ENCODE measurements at regions of chr5 and their contacts with region 1.

Region 1: GRCh38 chr5:1799602-1800471 is at the start of gene MRPL36:
- DNase-seq: peak; percentile 79 to 92 (median 87)
- ATAC-seq: peak; percentile 84
- H3K4me3 ChIP-seq: peak within 1 kb of the TSS; percentile 63
- H3K4me3 Mint-ChIP-seq: peak within 1 kb of the TSS; percentile 93 to 100 (median 99)
- H3K27ac ChIP-seq: peak within 1 kb of the TSS; percentile 88
- H3K27ac Mint-ChIP-seq: peak within 1 kb of the TSS; percentile 95 to 100 (median 99)
- H3K4me1 ChIP-seq: peaks cover 12 to 13% of the 10 kb centered on the region in 2 donors
- H3K4me1 Mint-ChIP-seq: peaks cover 41 to 69% (median 60%) of the 10 kb centered on the region in 7 donors
- H3K27me3 ChIP-seq: no peaks in the 10 kb centered on the region
- H3K27me3 Mint-ChIP-seq: no peaks in the 10 kb centered on the region
- total RNA-seq, gene MRPL36: 14.1 to 52.6 (median 26.8) TPM

Region 2: GRCh38 chr5:611721-612486 is 1187.9 kb before region 1 on chr5 and contains the start of gene CEP72:
- CTCF ChIA-PET with region 1: no interaction called
- POLR2A ChIA-PET with region 1: no interaction called
- intact Hi-C with region 1: loop called in 1 of 2 experiments (anchors 10 kb)
- DNase-seq: peak; percentile 81 to 96 (median 88)
- ATAC-seq: peak; percentile 98
- H3K4me3 ChIP-seq: peak within 1 kb of the TSS; percentile 59
- H3K4me3 Mint-ChIP-seq: peak within 1 kb of the TSS; percentile 84 to 99 (median 95)
- H3K27ac ChIP-seq: peak within 1 kb of the TSS; percentile 75
- H3K27ac Mint-ChIP-seq: peak within 1 kb of the TSS; percentile 76 to 96 (median 85)
- H3K4me1 ChIP-seq: peaks cover 5 to 7% of the 10 kb centered on the region in 2 donors
- H3K4me1 Mint-ChIP-seq: peaks cover 36 to 60% (median 56%) of the 10 kb centered on the region in 7 donors
- H3K27me3 ChIP-seq: no peaks in the 10 kb centered on the region
- H3K27me3 Mint-ChIP-seq: peaks cover 0 to 14% (median 8%) of the 10 kb centered on the region in 5 donors
- total RNA-seq, gene CEP72: 13.4 to 33.8 (median 22.7) TPM

Region 3: GRCh38 chr5:1105350-1106265 is 694.2 kb before region 1 on chr5:
- CTCF ChIA-PET with region 1: no interaction called
- POLR2A ChIA-PET with region 1: no interaction called
- intact Hi-C with region 1: loop called (anchors 2 to 5 kb)
- DNase-seq: peak; percentile 50 to 86 (median 83)
- ATAC-seq: peak; percentile 82
- H3K4me3 ChIP-seq: peak overlapping the region; percentile 77
- H3K4me3 Mint-ChIP-seq: peak overlapping the region; percentile 77 to 94 (median 88)
- H3K27ac ChIP-seq: peak overlapping the region; percentile 89
- H3K27ac Mint-ChIP-seq: peak overlapping the region; percentile 85 to 100 (median 97)
- H3K4me1 ChIP-seq: peaks cover 37 to 79% of the 10 kb centered on the region in 2 donors
- H3K4me1 Mint-ChIP-seq: peaks cover 48 to 90% (median 69%) of the 10 kb centered on the region in 7 donors
- H3K27me3 ChIP-seq: no peaks in the 10 kb centered on the region
- H3K27me3 Mint-ChIP-seq: no peaks in the 10 kb centered on the region

Region 4: GRCh38 chr5:1344975-1345838 is 454.6 kb before region 1 on chr5 and contains the start of gene CLPTM1L:
- CTCF ChIA-PET with region 1: no interaction called
- POLR2A ChIA-PET with region 1: no interaction called
- intact Hi-C with region 1: loop called (anchors 2 to 10 kb)
- DNase-seq: peak; percentile 82 to 93 (median 90)
- ATAC-seq: peak; percentile 95
- H3K4me3 ChIP-seq: peak within 1 kb of the TSS; percentile 79
- H3K4me3 Mint-ChIP-seq: peak within 1 kb of the TSS; percentile 84 to 95 (median 91)
- H3K27ac ChIP-seq: peak within 1 kb of the TSS; percentile 97
- H3K27ac Mint-ChIP-seq: peak within 1 kb of the TSS; percentile 72 to 95 (median 88)
- H3K4me1 ChIP-seq: peaks cover 12 to 18% of the 10 kb centered on the region in 2 donors
- H3K4me1 Mint-ChIP-seq: peaks cover 21 to 44% (median 33%) of the 10 kb centered on the region in 7 donors
- H3K27me3 ChIP-seq: no peaks in the 10 kb centered on the region
- H3K27me3 Mint-ChIP-seq: no peaks in the 10 kb centered on the region
- total RNA-seq, gene CLPTM1L: 64.9 to 104 (median 71.9) TPM

Region 5: DNA sequence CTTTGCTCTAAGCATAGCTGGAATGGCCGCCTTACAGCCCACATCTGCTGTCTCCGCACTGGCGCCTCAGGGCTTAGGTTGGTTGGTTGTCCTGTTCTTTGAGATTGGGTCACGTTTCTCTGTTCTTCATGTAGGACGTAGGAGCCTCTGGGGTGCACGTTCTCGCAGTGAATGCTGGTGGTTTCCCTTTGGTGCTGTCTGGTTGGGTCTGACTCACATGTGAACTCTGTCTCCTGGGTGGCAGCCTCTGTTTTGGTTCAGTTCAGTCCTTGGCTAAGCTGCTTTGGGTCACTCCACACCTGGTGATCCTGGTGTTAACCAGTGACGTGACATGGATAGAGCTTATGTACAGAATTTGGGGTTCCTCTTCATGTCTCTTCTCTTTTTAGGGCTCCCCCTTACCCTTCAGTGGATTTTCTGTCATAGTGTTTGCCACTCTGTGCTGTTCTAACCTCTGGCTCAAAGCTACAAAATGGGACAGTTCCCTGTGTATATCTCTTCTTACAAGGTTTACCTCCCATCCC is 263.5 kb before region 1 on chr5:
- CTCF ChIA-PET with region 1: no interaction called
- POLR2A ChIA-PET with region 1: no interaction called
- intact Hi-C with region 1: loop called in 1 of 2 experiments (anchors 5 kb)
- DNase-seq: peak; percentile 25 to 72 (median 61)
- ATAC-seq: peak; percentile 97
- H3K4me3 ChIP-seq: peak overlapping the region; percentile 59
- H3K4me3 Mint-ChIP-seq: peak overlapping the region; percentile 71 to 90 (median 82)
- H3K27ac ChIP-seq: peak overlapping the region; percentile 75
- H3K27ac Mint-ChIP-seq: peak overlapping the region; percentile 81 to 94 (median 91)
- H3K4me1 ChIP-seq: peaks cover 11 to 22% of the 10 kb centered on the region in 2 donors
- H3K4me1 Mint-ChIP-seq: peaks cover 19 to 37% (median 30%) of the 10 kb centered on the region in 7 donors
- H3K27me3 ChIP-seq: no peaks in the 10 kb centered on the region
- H3K27me3 Mint-ChIP-seq: peaks cover 0 to 39% (median 0%) of the 10 kb centered on the region in 5 donors

Region 6: GRCh38 chr5:1568201-1568979 is 231.4 kb before region 1 on chr5:
- CTCF ChIA-PET with region 1: no interaction called
- POLR2A ChIA-PET with region 1: no interaction called
- intact Hi-C with region 1: no loop called
- DNase-seq: no peak
- ATAC-seq: no peak
- H3K4me3 ChIP-seq: no peak overlapping the region
- H3K4me3 Mint-ChIP-seq: no peak overlapping the region
- H3K27ac ChIP-seq: no peak overlapping the region
- H3K27ac Mint-ChIP-seq: peak overlapping the region in 3 of 9 donors; percentile 8 to 59 (median 56)
- H3K4me1 ChIP-seq: no peaks in the 10 kb centered on the region
- H3K4me1 Mint-ChIP-seq: peaks cover 0 to 7% (median 0%) of the 10 kb centered on the region in 7 donors
- H3K27me3 ChIP-seq: no peaks in the 10 kb centered on the region
- H3K27me3 Mint-ChIP-seq: no peaks in the 10 kb centered on the region

Region 7: GRCh38 chr5:1763548-1763911 is 36.3 kb before region 1 on chr5:
- CTCF ChIA-PET with region 1: no interaction called
- POLR2A ChIA-PET with region 1: interaction called, 4 read pairs
- intact Hi-C with region 1: loop called (anchors 1 kb)
- DNase-seq: peak in 6 of 9 donors; percentile 4 to 39 (median 22)
- ATAC-seq: no peak
- H3K4me3 ChIP-seq: no peak overlapping the region
- H3K4me3 Mint-ChIP-seq: no peak overlapping the region
- H3K27ac ChIP-seq: no peak overlapping the region
- H3K27ac Mint-ChIP-seq: no peak overlapping the region
- H3K4me1 ChIP-seq: no peaks in the 10 kb centered on the region
- H3K4me1 Mint-ChIP-seq: peaks cover 0 to 4% (median 0%) of the 10 kb centered on the region in 7 donors
- H3K27me3 ChIP-seq: no peaks in the 10 kb centered on the region
- H3K27me3 Mint-ChIP-seq: peaks cover 6 to 25% (median 12%) of the 10 kb centered on the region in 5 donors

Measured in naive thymus-derived CD4-positive, alpha-beta T cell (primary cell).